GM10248 (cell line): ENCODE measurements at regions of chr20 and their contacts with region 1.

Region 1: GRCh38 chr20:35134472-35134871 is 12.7 kb downstream of the EDEM2 start:
- DNase-seq: no peak
- CTCF ChIP-seq: no peak

Region 2: GRCh38 chr20:35854713-35855434 is 720.4 kb after region 1 on chr20:
- CTCF ChIA-PET with region 1: no interaction called
- POLR2A ChIA-PET with region 1: interaction called, 11 read pairs
- DNase-seq: no peak
- CTCF ChIP-seq: no peak